ENCODE measurements at regions of chr12 and their contacts with region 1.

Region 1: DNA sequence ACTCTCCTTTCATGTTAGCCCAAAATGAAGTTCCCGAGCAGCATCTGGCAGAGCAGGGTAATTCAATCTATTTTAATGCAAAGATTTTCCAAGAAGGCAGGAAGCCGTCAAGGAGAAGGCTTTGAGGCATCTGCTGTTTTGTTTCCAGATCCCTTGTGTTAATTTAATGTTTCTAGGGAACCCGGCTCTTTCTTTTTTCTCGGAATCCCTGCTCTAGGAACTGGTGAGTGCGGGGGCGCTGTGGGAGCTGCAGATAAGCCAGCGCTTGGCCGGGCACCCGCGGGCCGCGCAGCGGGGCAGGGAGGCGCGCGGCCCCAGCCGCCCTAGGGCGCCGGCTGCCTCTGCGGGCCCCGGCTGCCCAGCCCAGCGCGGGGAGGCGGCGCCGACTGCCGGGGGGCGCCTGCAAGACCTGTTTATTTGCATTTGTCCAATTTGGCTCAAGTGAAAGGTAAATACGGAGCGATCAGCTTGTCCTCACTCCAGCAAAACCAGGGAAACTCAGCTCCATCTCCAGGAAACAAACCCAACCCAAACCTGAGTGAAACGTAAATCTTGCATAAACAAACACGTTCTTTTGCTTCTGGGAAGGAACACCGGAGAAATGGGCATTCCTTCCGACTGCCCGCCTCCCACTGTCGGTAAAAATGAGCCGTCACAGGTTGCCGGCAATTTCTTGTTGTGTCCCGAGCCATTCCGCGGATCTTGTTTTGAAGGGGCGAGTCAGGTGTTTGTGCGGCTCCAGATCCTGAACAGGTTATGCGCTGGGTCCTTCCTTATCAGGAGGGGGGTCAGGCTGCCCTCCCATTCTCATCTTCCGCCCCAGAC is 65.1 kb downstream of the CRADD start:
- DNase-seq: peak; percentile 76
- ATAC-seq: peak; percentile 95
- H3K4me3 ChIP-seq: peak overlapping the region; percentile 81
- H3K27ac ChIP-seq: peak overlapping the region; percentile 78
- H3K4me1 ChIP-seq: peaks cover 22% of the 10 kb centered on the region
- H3K27me3 ChIP-seq: no peaks in the 10 kb centered on the region
- CTCF ChIP-seq: peak; percentile 50; the same call in 1 of the 2 replicates

Region 2: DNA sequence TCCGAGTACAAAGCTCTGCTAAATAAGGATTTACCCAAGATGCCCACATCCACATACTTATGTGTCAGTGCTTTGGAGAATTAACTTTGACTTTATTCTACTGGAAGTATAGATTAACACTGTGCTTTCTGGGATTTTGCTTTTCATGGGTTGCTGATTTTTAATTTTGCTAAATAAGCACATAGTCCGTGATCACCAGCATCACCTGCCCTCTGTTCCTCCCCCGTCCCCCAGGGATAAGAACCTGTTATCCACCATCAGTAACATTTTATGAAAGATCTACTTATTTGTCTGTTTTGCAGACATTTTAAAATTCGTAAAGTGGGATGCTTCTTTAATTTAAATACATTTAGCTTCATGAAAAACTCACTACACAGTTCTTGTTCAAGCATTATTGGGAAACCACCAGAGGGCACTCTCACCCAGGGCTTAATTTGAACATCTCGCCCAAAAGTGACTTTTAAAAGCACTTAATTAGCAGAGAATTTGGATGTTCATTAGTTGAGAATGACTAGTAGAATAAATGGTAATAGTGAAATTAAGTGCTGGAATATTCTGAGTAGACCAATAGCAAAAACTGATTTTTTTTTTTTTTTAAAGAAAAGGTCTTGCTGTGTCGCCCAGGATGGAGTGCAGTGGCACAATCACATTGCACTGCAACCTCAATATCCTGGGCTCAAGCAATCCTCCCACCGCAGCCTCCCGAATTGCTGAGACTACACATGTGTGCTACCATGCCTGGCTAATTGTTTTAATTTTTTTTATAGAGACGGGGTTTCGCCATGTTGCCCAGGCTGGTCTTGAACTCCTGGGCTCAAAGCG is 239.3 kb before region 1 on chr12:
- CTCF ChIA-PET with region 1: interaction called, 3 read pairs
- POLR2A ChIA-PET with region 1: no interaction called
- intact Hi-C with region 1: loop called (anchors 2 kb)
- DNase-seq: peak; percentile 65
- ATAC-seq: peak; percentile 33; the same call in 1 of the 2 replicates
- H3K4me3 ChIP-seq: no peak overlapping the region
- H3K27ac ChIP-seq: no peak overlapping the region
- H3K4me1 ChIP-seq: no peaks in the 10 kb centered on the region
- H3K27me3 ChIP-seq: no peaks in the 10 kb centered on the region
- CTCF ChIP-seq: peak; percentile 92

Region 3: DNA sequence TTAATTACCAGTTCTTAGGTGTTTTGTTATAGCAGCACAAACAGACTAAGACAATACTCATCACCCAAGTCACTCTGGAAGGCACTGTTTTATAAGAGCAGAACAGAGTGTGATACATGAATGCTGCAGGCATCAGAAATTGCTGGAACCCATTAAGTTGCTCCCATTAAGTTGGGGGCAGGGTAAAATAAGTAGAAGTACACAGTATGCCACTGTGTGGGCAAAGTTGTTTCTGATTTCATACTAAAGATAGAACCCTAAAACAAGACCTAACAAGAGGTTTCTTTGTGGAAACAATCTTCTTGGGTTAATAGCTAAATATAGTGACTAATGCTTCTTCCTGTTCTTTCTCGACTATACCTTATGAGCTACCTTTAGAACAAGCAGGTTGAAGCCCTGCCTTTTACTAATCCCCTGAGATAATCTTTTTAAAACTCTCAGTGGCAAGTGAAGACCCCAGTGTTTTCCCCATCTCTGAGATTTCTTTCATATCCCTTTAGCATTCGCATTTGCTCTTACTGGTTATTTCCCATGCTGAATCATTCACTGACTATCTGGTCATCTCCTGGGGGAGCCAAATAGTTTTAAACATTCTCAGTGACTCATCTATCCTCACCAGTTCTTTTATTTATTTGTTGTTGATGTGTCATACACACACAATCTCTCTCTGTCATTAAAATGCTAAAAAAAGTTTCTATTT is 117.6 kb before region 1 on chr12:
- CTCF ChIA-PET with region 1: no interaction called
- POLR2A ChIA-PET with region 1: interaction called, 3 read pairs
- intact Hi-C with region 1: loop called (anchors 1 kb)
- DNase-seq: peak; percentile 95
- ATAC-seq: peak; percentile 85
- H3K4me3 ChIP-seq: peak overlapping the region; percentile 7; the same call in 1 of the 2 replicates
- H3K27ac ChIP-seq: peak overlapping the region; percentile 93
- H3K4me1 ChIP-seq: peaks cover 36% of the 10 kb centered on the region
- H3K27me3 ChIP-seq: no peaks in the 10 kb centered on the region
- CTCF ChIP-seq: no peak

Region 4: GRCh38 chr12:93677195-93678064 is 64.9 kb before region 1 on chr12 and contains the start of gene CRADD:
- CTCF ChIA-PET with region 1: no interaction called
- POLR2A ChIA-PET with region 1: no interaction called
- intact Hi-C with region 1: loop called (anchors 2 kb)
- DNase-seq: peak; percentile 95
- ATAC-seq: peak; percentile 90
- H3K4me3 ChIP-seq: peak within 1 kb of the TSS; percentile 88
- H3K27ac ChIP-seq: peak within 1 kb of the TSS; percentile 94
- H3K4me1 ChIP-seq: peaks cover 15% of the 10 kb centered on the region
- H3K27me3 ChIP-seq: no peaks in the 10 kb centered on the region
- CTCF ChIP-seq: no peak
- total RNA-seq, gene CRADD: 11.4 and 12.5 TPM in 2 replicates

Region 5: DNA sequence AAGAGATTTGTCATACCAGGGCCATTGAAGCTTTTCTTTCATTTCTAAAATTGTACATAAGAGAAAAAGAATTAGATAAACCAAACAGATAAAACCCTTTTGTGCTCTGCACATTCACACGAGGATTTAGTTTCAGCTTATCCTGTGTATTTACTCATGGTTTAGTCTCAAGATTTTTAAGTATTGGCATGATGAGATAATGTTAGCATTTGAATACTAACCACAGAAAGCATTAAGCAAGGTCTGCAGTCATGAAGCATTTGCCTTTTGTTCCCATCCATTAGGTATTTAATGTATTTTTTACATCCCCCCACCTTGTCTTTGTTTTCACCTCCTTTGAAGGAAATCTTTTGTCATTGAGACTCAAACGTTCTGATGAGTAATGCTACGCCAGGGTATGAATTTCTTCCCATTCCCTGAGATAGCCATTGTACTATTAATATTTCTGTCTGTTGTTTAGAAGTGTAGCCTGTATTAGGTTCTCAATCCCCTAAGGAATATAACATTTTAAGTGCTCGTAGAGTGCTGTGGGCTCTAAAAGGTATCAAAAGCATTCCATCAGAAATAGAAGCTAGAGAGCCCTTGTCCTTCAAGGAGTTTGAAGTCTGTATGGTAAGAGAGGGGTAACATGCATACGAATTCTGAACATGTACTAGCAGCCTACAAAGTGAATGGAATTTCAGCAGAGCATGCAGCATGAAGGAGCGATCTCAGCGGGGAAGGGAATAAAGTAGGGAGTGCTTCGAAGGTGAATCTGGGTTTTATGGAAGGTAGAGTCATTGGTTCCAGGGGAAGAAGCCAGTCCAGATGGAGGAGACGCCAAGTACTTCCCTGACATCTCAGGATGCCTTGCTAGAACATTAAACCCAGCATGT is 42.8 kb before region 1 on chr12:
- CTCF ChIA-PET with region 1: no interaction called
- POLR2A ChIA-PET with region 1: no interaction called
- intact Hi-C with region 1: loop called (anchors 2 kb)
- DNase-seq: peak; percentile 84
- ATAC-seq: peak; percentile 64
- H3K4me3 ChIP-seq: peak overlapping the region; percentile 45; the same call in 1 of the 2 replicates
- H3K27ac ChIP-seq: peak overlapping the region; percentile 97
- H3K4me1 ChIP-seq: peaks cover 47% of the 10 kb centered on the region
- H3K27me3 ChIP-seq: no peaks in the 10 kb centered on the region
- CTCF ChIP-seq: no peak